PC-3 (cell line): ENCODE measurements at regions of chr12 and their contacts with region 1.

Region 1: GRCh38 chr12:109518820-109519665 is 41.6 kb downstream of the UBE3B start:
- DNase-seq: peak; percentile 77
- ATAC-seq: peak; percentile 91
- H3K4me3 ChIP-seq: no peak overlapping the region
- H3K27ac ChIP-seq: no peak overlapping the region
- H3K4me1 ChIP-seq: no peaks in the 10 kb centered on the region
- H3K27me3 ChIP-seq: no peaks in the 10 kb centered on the region
- CTCF ChIP-seq: peak; percentile 97

Region 2: DNA sequence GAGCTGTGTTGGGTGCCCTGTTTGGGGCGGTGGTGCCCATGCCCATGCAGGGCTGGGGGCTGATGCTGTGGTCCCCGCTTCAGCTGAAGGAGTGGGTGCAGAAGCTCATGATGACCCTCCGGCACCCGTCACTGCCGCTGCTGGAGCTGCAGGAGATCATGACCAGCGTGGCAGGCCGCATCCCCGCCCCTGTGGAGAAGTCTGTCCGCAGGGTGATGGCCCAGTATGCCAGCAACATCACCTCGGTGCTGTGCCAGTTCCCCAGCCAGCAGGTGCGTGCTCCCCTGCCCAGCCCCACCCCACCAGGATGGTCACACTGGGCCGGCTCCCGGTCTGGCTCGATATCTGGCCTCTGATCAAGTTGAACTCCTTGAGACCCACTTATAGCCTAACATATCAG is 310.0 kb before region 1 on chr12:
- CTCF ChIA-PET with region 1: no interaction called
- POLR2A ChIA-PET with region 1: no interaction called
- intact Hi-C with region 1: no loop called
- DNase-seq: no peak
- ATAC-seq: no peak
- H3K4me3 ChIP-seq: no peak overlapping the region
- H3K27ac ChIP-seq: no peak overlapping the region
- H3K4me1 ChIP-seq: no peaks in the 10 kb centered on the region
- H3K27me3 ChIP-seq: no peaks in the 10 kb centered on the region
- CTCF ChIP-seq: no peak

Region 3: GRCh38 chr12:109477185-109477962 is 41.7 kb before region 1 on chr12 and contains the starts of genes KCTD10 and UBE3B:
- CTCF ChIA-PET with region 1: no interaction called
- POLR2A ChIA-PET with region 1: no interaction called
- intact Hi-C with region 1: no loop called
- DNase-seq: peak; percentile 93
- ATAC-seq: peak; percentile 93
- H3K4me3 ChIP-seq: peak within 1 kb of the TSS; percentile 90
- H3K27ac ChIP-seq: peak within 1 kb of the TSS; percentile 65
- H3K4me1 ChIP-seq: peaks cover 20% of the 10 kb centered on the region
- H3K27me3 ChIP-seq: no peaks in the 10 kb centered on the region
- CTCF ChIP-seq: no peak
- total RNA-seq, gene KCTD10: 42.3 and 58.1 TPM in 2 replicates
- total RNA-seq, gene UBE3B: 25.7 and 35.6 TPM in 2 replicates

Region 4: GRCh38 chr12:109573029-109573913 is 54.2 kb after region 1 on chr12 and contains the starts of genes MMAB and MVK:
- CTCF ChIA-PET with region 1: interaction called, 8 read pairs
- POLR2A ChIA-PET with region 1: no interaction called
- intact Hi-C with region 1: loop called (anchors 2 kb)
- DNase-seq: peak; percentile 100
- ATAC-seq: peak; percentile 96
- H3K4me3 ChIP-seq: peak within 1 kb of the TSS; percentile 81
- H3K27ac ChIP-seq: peak within 1 kb of the TSS; percentile 57
- H3K4me1 ChIP-seq: peaks cover 16% of the 10 kb centered on the region
- H3K27me3 ChIP-seq: no peaks in the 10 kb centered on the region
- CTCF ChIP-seq: no peak
- total RNA-seq, gene MMAB: 83.0 and 83.5 TPM in 2 replicates
- total RNA-seq, gene MVK: 47.8 and 52.2 TPM in 2 replicates

Region 5: DNA sequence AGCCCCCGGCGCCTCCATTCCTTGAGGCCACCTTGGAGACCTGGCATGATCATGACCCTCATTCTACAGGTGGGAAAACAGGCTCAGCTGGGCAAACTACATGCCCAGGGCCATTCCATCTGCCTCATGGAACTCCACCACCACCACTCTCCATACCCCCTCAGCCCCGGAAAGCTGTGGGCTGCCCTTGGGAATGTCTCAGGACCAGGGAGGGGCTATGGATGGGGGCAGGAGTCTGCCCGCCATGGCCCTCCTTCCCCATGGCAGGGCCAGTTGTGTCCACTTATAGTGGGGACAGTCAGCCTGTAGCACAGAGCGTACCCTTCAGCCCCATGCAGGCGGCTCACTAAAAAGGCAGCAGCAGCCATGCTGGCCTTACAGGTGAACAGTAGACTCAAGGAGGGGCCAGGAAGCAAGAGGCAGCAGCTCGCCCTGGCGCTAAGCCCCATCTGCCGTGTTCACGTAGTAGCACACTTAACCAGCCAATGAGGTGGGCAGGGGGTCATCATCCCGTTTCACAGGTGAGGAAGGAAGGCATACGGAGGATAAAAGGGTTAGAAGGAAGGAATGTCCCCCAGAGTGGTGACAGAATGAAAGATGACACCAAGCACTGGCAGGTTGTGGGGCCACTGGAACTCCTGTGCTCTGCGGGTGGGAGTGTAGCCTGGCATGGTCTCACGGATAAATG is 247.2 kb after region 1 on chr12:
- CTCF ChIA-PET with region 1: no interaction called
- POLR2A ChIA-PET with region 1: interaction called, 15 read pairs
- intact Hi-C with region 1: no loop called
- DNase-seq: no peak
- ATAC-seq: no peak
- H3K4me3 ChIP-seq: no peak overlapping the region
- H3K27ac ChIP-seq: no peak overlapping the region
- H3K4me1 ChIP-seq: peaks cover 6% of the 10 kb centered on the region
- H3K27me3 ChIP-seq: no peaks in the 10 kb centered on the region
- CTCF ChIP-seq: no peak

Region 6: DNA sequence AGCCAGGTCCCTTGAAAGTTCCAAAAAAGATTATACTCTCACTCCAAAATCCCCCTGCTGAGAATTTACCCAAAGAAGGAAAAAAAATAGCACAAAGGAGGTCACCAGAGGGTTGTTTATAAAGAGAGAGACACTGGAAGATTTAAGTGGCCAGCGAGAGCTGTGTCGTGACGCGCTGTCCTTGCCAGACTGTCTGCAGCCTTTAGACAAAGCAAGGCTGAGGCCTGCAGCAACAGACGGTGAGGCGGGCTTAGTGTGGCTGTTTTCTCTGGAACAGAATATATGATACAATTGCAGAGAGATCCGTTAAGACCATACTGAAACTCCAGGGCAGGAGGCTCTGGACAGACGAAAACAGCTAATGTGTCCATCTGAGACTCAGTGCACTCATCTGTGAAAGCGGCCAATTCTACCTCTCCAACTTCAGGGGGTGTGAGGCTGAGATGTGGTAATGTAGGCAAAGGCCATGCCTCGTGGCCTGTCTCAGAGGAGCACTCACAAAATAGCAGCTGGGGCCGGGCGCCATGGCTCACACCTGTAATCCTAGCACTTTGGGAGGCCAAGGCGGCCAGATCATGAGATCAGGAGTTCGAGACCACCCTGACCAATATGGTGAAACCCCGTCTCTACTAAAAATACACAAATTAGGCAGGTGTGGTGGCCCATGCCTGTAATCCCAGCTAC is 848.3 kb after region 1 on chr12:
- CTCF ChIA-PET with region 1: no interaction called
- POLR2A ChIA-PET with region 1: no interaction called
- intact Hi-C with region 1: no loop called
- DNase-seq: no peak
- ATAC-seq: no peak
- H3K4me3 ChIP-seq: no peak overlapping the region
- H3K27ac ChIP-seq: no peak overlapping the region
- H3K4me1 ChIP-seq: no peaks in the 10 kb centered on the region
- H3K27me3 ChIP-seq: no peaks in the 10 kb centered on the region
- CTCF ChIP-seq: no peak